SK-N-SH (cell line): ENCODE measurements at regions of chr11 and their contacts with region 1.

Region 1: DNA sequence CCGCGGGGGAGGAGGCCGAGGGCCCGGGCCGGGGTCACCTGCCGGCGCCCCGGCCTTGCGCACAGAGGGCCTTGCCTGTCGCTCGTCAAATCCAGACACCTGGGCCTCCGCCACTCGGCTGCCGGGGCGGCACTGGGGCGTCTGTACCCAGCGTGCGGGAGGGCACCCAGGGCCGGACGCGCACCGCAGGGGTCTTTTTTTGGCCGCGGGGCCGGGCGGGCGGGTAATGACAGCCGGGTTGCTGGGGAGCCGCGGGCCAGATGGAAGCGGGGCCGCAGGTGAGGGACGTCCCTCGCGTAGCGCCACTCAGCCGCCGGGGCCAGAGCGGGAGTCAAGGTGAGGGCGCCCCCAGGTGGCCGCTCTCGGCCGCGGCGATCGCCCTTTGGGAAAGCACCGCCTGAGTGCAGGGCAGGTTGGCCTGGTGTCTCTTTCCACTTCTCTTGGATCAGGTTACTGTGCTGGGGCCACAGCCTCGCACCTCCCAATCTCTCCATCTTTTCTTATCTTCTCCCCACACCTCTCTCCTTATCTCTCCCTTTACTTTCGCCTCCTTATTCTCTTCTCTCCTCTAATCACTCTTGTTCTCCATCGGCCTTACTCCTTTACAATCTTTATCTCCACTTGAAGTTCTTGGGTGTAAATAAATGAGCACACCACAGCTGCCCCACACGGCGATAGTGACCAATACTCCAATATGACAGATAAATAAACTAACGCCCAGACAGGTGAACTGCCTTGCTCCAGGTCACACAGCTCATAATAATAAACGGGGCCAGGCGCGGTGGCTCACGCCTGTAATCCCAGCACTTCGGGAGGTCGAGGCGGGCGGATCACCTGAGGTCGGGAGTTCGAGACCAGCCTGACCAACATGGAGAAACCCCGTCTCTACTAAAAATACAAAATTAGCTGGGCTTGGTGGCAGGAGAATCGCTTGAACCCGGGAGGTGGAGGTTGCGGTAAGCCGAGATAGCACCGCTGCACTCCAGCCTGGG is 3.7 kb downstream of the PHLDB1 start:
- DNase-seq: no peak
- H3K4me3 ChIP-seq: no peak overlapping the region; a peak in 1 of 4 replicates
- H3K27ac ChIP-seq: no peak overlapping the region
- H3K4me1 ChIP-seq: peaks cover 14 to 41% of the 10 kb centered on the region in 2 experiments
- H3K27me3 ChIP-seq: no peaks in the 10 kb centered on the region
- CTCF ChIP-seq: peak; percentile 54
- EP300 ChIP-seq: no peak
- RAD21 ChIP-seq: no peak

Region 2: DNA sequence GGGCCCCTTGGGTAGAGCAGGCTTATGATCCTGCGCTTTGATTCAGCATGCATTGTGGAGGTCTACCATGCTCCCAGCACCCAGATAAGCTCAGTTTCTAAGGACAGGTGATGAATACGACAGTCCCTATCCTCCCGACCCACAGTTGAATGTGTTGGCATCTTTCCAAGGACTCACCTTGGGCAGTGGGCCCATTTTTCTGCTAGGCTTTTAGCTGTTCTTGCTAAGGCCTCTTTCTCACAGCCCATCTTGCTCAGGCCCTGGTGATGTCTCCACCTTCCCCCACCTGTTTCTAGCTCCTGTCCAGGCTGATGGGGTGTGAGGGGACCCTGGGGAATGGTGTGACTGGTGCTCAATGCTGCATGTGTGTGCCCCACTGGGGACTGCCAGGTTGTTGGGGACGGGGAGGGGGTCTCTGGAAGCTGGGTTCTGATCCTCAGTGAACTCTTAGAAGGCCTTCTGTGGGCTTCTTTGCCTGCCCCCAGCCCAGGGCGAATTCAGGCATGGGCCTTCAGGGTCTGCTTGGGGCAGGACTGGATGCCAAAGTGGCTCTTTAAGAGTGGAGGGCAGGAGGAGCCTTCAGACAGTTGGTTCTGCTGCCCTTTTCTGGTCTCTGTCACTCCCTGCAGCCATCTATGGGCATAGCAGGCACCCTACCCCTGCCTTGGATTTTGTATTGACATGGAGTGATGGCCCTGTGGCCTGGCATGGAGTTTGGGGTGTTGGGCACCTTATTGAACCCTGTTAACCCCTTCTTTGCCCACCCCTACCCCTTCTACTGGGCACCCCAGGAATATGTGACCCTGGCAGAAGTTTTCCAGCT is 29.4 kb after region 1 on chr11:
- CTCF ChIA-PET with region 1: interaction called, 44 read pairs
- POLR2A ChIA-PET with region 1: no interaction called
- DNase-seq: peak; percentile 52
- H3K4me3 ChIP-seq: no peak overlapping the region
- H3K27ac ChIP-seq: peak overlapping the region in 1 of 2 experiments; percentile 77; a peak in 1 of 4 replicates
- H3K4me1 ChIP-seq: peaks cover 0 to 34% of the 10 kb centered on the region in 2 experiments; a peak in 1 of 4 replicates
- H3K27me3 ChIP-seq: no peaks in the 10 kb centered on the region
- CTCF ChIP-seq: peak; percentile 21; the same call in 1 of the 2 replicates
- EP300 ChIP-seq: no peak
- RAD21 ChIP-seq: peak; percentile 69

Region 3: DNA sequence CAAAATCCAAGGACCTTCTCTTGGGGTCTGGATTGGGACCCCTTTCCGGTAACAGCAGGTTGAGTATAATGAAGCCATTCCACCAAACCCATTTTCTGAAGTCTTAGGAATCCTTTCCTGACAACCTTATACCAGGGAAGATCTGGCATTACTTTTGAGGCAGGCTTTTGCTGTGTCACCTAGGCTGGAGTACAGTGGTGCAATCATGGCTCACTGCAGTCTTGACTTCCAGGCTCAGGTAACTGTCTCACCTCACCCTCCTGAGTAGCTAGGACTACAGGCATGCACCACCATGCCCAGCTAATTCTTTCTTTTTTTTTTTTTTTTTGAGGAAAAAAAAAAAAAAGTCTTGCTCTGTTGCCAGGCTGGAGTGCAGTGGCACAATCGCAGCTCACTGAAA is 124.1 kb after region 1 on chr11:
- CTCF ChIA-PET with region 1: no interaction called
- POLR2A ChIA-PET with region 1: no interaction called
- DNase-seq: no peak
- H3K4me3 ChIP-seq: no peak overlapping the region
- H3K27ac ChIP-seq: no peak overlapping the region
- H3K4me1 ChIP-seq: peaks cover 0 to 3% of the 10 kb centered on the region in 2 experiments; a peak in 1 of 4 replicates
- H3K27me3 ChIP-seq: no peaks in the 10 kb centered on the region
- CTCF ChIP-seq: no peak
- EP300 ChIP-seq: no peak
- RAD21 ChIP-seq: no peak